Ascending aorta (tissue), 2 donors: ENCODE measurements at regions of chr12 and their contacts with region 1.

Region 1: GRCh38 chr12:111766608-111767361 is at the start of gene ALDH2:
- DNase-seq: peak in 1 of 2 donors; percentile 84
- H3K4me3 ChIP-seq: peak within 1 kb of the TSS; percentile 88 to 99
- H3K27ac ChIP-seq: peak within 1 kb of the TSS; percentile 88 to 92
- H3K4me1 ChIP-seq: peaks cover 10 to 21% of the 10 kb centered on the region in 2 donors
- H3K27me3 ChIP-seq: no peaks in the 10 kb centered on the region
- CTCF ChIP-seq: peak in 1 of 3 experiments; percentile 22
- total RNA-seq, gene ALDH2: 66.4 TPM

Region 2: DNA sequence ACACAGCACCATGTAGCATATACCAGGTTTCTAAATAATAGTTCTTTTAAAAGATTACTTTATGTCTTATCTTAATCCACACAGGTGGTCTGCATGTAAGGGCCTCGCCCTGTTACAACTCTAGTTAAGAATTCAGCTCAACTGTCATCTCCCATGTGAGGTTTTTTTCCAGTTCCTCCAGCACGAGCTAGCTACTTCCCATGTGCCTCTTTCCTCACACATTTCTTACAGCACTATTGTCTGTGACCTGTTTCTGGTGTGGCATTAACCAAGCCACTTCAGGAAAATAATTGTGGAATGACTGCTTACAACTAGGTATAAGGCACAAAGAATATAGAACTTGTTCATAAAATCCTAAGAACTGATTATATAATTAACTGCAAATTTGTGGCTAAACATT is 295.5 kb before region 1 on chr12:
- intact Hi-C with region 1: no loop called
- DNase-seq: no peak
- H3K4me3 ChIP-seq: no peak overlapping the region
- H3K27ac ChIP-seq: peak overlapping the region in 1 of 2 donors; percentile 15
- H3K4me1 ChIP-seq: peaks cover 0 to 12% of the 10 kb centered on the region in 2 donors
- H3K27me3 ChIP-seq: no peaks in the 10 kb centered on the region
- CTCF ChIP-seq: no peak

Region 3: DNA sequence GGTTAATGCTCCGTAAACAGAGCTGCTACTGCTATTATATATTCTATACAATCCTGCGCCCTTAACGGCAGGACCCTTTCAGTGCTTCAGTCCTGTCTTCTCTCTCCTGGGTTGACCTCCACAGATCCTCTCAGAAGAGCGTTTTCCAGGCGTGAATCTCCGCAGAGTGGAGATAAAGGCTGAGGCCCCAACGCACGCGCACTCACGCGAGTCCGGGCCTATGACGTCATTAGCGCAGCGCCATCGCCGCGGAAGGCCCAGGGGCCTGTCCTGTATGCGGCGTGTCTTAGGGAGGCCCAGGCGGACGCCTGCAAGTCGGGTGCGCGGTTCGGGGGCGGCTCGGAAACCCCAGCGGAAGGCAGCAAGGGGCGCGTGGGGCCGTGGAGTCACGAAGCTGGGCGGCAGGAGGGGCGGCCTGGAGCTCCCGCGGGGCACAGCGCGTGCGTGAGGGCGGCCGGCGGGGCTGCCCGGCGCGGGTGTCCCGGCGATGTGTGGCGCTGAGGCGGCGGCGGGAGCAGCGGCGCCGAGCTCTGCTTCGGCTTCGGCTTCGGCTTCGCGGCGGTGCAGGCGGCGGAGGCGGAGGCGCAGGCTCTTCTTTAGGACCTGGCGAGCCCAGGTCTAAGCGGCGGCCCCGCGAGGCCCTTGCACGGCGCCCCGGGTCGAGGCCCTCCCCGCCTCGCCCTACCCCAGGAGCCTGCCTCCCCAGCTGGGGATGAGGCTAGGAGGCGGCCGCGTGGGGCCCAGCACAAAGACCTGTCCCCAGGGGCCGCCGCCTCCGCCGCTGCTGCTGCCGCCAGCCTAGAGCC is 75.2 kb after region 1 on chr12 and contains the start of gene MAPKAPK5:
- intact Hi-C with region 1: loop called (anchors 2 kb)
- DNase-seq: peak; percentile 74 to 97
- H3K4me3 ChIP-seq: peak within 1 kb of the TSS; percentile 92 to 96
- H3K27ac ChIP-seq: peak within 1 kb of the TSS; percentile 88 to 94
- H3K4me1 ChIP-seq: peaks cover 8 to 23% of the 10 kb centered on the region in 2 donors
- H3K27me3 ChIP-seq: no peaks in the 10 kb centered on the region
- CTCF ChIP-seq: no peak
- total RNA-seq, gene MAPKAPK5: 6.4 TPM